ENCODE measurements at regions of chr10 and their contacts with region 1.

Region 1: DNA sequence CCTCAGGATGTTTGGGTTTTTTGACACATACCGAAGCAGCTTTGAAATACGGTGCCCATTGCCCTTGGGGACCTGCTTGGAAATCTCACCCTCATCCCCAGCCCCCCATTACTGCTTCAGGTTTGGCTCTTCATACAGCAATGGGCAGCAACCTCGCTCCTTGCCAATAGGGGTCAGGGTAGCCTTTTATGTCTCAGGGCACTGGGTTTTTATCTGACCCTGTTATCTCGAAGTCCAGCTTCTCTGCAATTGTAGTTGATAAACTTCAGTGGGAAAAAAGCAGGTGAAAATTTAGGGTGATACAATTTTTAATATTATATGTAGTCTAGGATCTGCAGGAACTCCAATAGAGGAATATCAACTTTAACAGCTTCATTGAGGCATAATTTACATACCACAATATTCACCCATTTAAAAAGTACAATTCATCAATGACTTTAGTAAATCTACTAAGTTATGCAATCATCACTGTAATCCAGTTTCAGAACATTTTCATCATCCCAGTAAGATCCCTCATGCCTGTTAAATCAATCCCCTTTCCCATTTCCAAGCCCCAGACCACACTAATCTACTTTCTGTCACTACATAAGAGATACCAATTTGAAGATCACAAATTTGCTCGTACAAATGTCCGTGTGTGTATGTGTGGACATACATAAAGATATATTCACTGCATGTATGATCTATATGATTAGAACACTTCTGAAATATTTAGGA is 386.2 kb downstream of the KCNMA1 start:
- DNase-seq: peak in 5 of 9 experiments; percentile 4 to 64 (median 55)
- ATAC-seq: no peak
- H3K4me3 ChIP-seq: no peak overlapping the region
- H3K4me3 Mint-ChIP-seq: no peak overlapping the region
- H3K27ac ChIP-seq: no peak overlapping the region
- H3K27ac Mint-ChIP-seq: no peak overlapping the region
- H3K4me1 ChIP-seq: peaks cover 21% of the 10 kb centered on the region
- H3K4me1 Mint-ChIP-seq: peaks cover 23% of the 10 kb centered on the region
- H3K27me3 ChIP-seq: no peaks in the 10 kb centered on the region
- H3K27me3 Mint-ChIP-seq: no peaks in the 10 kb centered on the region
- CTCF ChIP-seq: peak; percentile 40

Region 2: DNA sequence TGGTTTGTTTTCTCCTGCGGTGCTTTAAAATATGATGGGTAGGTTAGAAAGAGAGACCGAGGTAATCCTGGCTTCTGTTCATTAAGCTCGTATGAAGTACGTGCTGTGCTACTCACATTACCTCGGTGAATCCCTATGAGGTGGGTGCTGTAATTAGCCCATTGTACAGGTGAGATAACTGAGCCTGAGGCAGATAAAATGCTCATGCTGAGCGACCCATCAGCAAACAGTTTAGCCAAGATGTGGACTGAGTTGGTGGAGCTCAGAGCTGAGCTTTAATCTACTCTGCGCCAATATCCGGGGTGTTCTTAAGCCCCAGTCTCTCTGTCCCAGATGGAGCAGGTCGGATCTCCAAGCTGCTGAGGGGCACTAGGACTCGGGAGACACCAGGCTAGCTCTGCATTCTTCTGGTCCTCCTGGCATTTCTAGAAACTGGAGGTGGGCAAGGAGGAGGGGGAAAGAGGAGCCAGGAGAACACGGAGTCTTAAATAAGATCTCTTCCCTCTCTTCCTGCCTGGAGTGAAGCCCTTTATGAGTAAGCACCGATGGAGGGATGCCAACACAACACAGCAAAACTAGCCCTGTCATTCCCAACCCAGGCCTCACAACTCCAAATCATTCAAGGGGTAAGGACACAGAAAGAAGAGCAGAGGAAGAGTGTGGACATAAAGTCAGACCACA is 72.3 kb before region 1 on chr10:
- CTCF ChIA-PET with region 1: interaction called, 30 read pairs
- POLR2A ChIA-PET with region 1: no interaction called
- intact Hi-C with region 1: loop called (anchors 5 kb)
- DNase-seq: no peak
- ATAC-seq: no peak
- H3K4me3 ChIP-seq: no peak overlapping the region
- H3K4me3 Mint-ChIP-seq: no peak overlapping the region
- H3K27ac ChIP-seq: no peak overlapping the region
- H3K27ac Mint-ChIP-seq: no peak overlapping the region
- H3K4me1 ChIP-seq: no peaks in the 10 kb centered on the region
- H3K4me1 Mint-ChIP-seq: no peaks in the 10 kb centered on the region
- H3K27me3 ChIP-seq: no peaks in the 10 kb centered on the region
- H3K27me3 Mint-ChIP-seq: peaks cover 4% of the 10 kb centered on the region
- CTCF ChIP-seq: no peak

Region 3: GRCh38 chr10:77636282-77636966 is 385.0 kb after region 1 on chr10:
- CTCF ChIA-PET with region 1: interaction called, 116 read pairs
- POLR2A ChIA-PET with region 1: no interaction called
- intact Hi-C with region 1: loop called in 1 of 2 experiments (anchors 1 kb)
- DNase-seq: no peak
- ATAC-seq: no peak
- H3K4me3 ChIP-seq: no peak overlapping the region
- H3K4me3 Mint-ChIP-seq: peak overlapping the region; percentile 45
- H3K27ac ChIP-seq: no peak overlapping the region
- H3K27ac Mint-ChIP-seq: no peak overlapping the region
- H3K4me1 ChIP-seq: no peaks in the 10 kb centered on the region
- H3K4me1 Mint-ChIP-seq: peaks cover 11% of the 10 kb centered on the region
- H3K27me3 ChIP-seq: peaks cover 2 to 14% of the 10 kb centered on the region in 2 experiments
- H3K27me3 Mint-ChIP-seq: peaks cover 61% of the 10 kb centered on the region
- CTCF ChIP-seq: no peak

Region 4: DNA sequence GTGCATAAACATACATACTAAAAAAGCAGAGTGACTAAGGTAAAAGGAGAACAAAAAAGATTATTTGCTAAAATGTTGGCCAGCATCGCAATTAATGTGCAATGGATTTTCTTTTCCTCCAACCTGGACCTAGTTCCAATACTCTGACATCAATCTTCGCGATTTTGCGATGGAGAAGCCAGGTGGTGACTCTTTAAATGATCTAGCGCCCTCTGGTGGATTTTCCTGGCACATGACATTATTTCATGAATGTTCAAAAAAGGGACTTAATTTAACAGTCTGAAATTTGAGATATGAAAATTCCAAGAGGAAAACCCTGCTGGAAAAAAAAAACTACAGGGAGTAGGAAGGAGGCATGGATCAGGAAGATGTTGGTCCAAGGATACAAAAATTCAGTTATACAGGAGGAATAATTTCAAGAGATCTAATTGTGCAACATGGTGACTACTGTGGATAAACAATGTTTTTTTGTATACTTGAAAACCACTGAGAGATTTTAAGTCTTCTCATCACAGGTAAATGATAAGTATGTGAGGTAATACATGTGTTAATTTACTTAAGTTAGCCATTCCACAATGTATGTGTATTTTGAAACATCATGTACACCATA is 390.4 kb after region 1 on chr10:
- CTCF ChIA-PET with region 1: interaction called, 116 read pairs
- POLR2A ChIA-PET with region 1: no interaction called
- intact Hi-C with region 1: loop called (anchors 1 kb)
- DNase-seq: peak in 8 of 9 experiments; percentile 23 to 72 (median 64)
- ATAC-seq: no peak
- H3K4me3 ChIP-seq: no peak overlapping the region
- H3K4me3 Mint-ChIP-seq: no peak overlapping the region
- H3K27ac ChIP-seq: no peak overlapping the region
- H3K27ac Mint-ChIP-seq: no peak overlapping the region
- H3K4me1 ChIP-seq: no peaks in the 10 kb centered on the region
- H3K4me1 Mint-ChIP-seq: peaks cover 11% of the 10 kb centered on the region
- H3K27me3 ChIP-seq: peaks cover 2 to 3% of the 10 kb centered on the region in 2 experiments
- H3K27me3 Mint-ChIP-seq: peaks cover 34% of the 10 kb centered on the region
- CTCF ChIP-seq: peak; percentile 85

Region 5: GRCh38 chr10:77710759-77711682 is 459.6 kb after region 1 on chr10:
- CTCF ChIA-PET with region 1: interaction called, 5 read pairs
- POLR2A ChIA-PET with region 1: no interaction called
- intact Hi-C with region 1: loop called in 1 of 2 experiments (anchors 10 kb)
- DNase-seq: peak; percentile 43 to 82 (median 69)
- ATAC-seq: peak; percentile 97
- H3K4me3 ChIP-seq: peak overlapping the region in 1 of 2 experiments; percentile 40
- H3K4me3 Mint-ChIP-seq: peak overlapping the region; percentile 72
- H3K27ac ChIP-seq: no peak overlapping the region
- H3K27ac Mint-ChIP-seq: no peak overlapping the region
- H3K4me1 ChIP-seq: no peaks in the 10 kb centered on the region
- H3K4me1 Mint-ChIP-seq: peaks cover 6% of the 10 kb centered on the region
- H3K27me3 ChIP-seq: peaks cover 1 to 3% of the 10 kb centered on the region in 2 experiments
- H3K27me3 Mint-ChIP-seq: peaks cover 22% of the 10 kb centered on the region
- CTCF ChIP-seq: peak; percentile 93